ENCODE measurements at regions of chr6 and their contacts with region 1.

Region 1: DNA sequence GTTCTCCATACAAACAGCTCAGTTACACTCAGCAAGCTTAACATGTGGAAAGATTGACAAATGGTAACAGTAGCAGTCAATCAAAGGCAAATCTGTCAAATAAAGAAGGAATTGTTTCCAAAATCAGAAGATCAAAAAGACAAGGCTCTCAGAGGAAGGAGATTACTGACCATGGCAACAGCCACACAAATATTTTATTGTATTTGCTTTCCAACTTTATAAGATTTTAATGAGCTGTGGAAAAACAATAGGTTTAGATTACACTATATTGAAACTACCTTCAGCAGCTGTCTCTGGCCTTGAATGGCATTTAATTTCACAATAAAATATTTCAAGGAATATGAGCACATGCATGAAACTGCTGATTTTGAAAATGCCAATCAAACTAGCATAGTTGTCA is 1143.9 kb upstream of the GJE1 start:
- DNase-seq: no peak
- ATAC-seq: no peak
- H3K4me3 ChIP-seq: no peak overlapping the region
- H3K27ac ChIP-seq: no peak overlapping the region
- H3K4me1 ChIP-seq: peaks cover 0 to 6% of the 10 kb centered on the region in 2 donors
- H3K27me3 ChIP-seq: no peaks in the 10 kb centered on the region

Region 2: DNA sequence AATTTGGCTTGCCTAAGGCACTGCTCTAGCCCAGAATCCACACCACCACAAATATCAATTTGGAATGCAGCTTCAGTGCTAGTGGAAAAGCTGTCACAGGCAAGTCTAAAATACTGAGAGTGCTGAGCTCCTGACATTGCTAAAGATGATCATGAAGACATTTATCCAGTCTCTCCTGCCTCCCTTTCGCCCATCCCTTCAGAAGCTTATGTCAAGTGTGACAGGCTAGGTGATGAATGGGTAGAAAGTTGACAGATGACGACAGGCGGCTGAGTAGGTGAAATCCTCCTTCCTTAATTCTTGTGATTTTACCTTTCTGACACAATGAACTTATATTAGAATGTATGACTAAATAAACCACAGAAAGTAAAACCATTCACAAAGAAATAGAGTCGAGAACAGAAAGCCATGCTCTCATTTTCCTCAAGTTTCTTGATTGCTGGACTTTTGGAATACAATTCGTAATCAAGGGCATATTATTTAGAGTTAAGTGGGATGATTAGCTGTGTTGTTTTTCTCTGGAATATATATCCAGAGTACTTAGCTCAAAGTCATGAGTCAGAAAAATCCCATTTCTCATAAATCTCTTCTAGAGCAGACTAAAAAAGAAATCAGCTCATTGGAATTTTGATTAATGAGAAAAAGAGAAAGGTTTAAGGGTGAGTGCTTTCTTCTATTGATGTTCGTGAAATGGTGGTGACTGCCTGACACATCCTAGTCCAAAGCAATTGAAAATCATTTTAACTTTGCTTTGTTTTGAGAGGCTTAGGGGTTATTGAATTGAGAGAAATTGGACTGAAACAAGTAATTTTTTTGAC is 386.1 kb before region 1 on chr6:
- intact Hi-C with region 1: loop called in 1 of 2 experiments (anchors 5 kb)
- DNase-seq: no peak
- ATAC-seq: no peak
- H3K4me3 ChIP-seq: no peak overlapping the region
- H3K27ac ChIP-seq: peak overlapping the region in 1 of 2 donors; percentile 10
- H3K4me1 ChIP-seq: peaks cover 0 to 2% of the 10 kb centered on the region in 2 donors
- H3K27me3 ChIP-seq: no peaks in the 10 kb centered on the region

Region 3: GRCh38 chr6:140846503-140847261 is 142.1 kb before region 1 on chr6:
- intact Hi-C with region 1: no loop called
- DNase-seq: no peak
- ATAC-seq: no peak
- H3K4me3 ChIP-seq: no peak overlapping the region
- H3K27ac ChIP-seq: no peak overlapping the region
- H3K4me1 ChIP-seq: peaks cover 2% of the 10 kb centered on the region in 2 donors
- H3K27me3 ChIP-seq: no peaks in the 10 kb centered on the region

Region 4: GRCh38 chr6:141164042-141164736 is 175.4 kb after region 1 on chr6:
- intact Hi-C with region 1: no loop called
- DNase-seq: no peak
- ATAC-seq: peak; percentile 26
- H3K4me3 ChIP-seq: no peak overlapping the region
- H3K27ac ChIP-seq: no peak overlapping the region
- H3K4me1 ChIP-seq: peaks cover 0 to 3% of the 10 kb centered on the region in 2 donors
- H3K27me3 ChIP-seq: no peaks in the 10 kb centered on the region

Measured in aorta (tissue), 5 donors.